Activated naive CD4-positive, alpha-beta T cell treated with anti-CD3 and anti-CD28 coated beads for 36 hours (primary cell): ENCODE measurements at regions of chr19 and their contacts with region 1.

Region 1: DNA sequence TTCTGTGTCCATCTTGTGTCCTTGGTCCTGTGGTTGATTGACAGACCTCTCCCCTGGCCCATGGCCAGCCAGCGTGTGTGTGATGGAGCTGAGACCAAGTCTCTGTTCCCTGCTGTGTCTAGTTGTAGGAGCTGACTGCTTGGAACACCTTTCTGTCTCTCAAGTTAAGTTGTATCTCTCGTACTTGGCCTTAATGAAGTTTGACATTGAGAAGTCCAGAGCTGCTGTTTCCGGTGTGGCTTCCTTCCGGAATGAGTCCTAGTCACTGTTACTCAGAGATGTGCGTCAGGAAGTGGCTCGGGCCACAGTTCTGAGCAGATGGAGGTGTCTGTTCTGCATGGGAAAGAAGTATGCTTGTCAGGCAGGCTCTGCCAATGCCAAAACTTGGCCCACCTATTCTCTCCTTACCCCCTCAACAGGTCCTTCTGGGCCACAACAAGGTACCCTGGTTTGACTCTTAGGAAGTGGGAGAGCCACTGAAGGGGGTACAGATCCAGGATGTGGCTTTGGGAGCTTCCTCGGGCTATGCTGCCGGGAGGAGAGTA is 54.3 kb downstream of the GATAD2A start:
- DNase-seq: peak; percentile 89
- H3K4me3 Mint-ChIP-seq: peak overlapping the region; percentile 76
- H3K27ac Mint-ChIP-seq: peak overlapping the region; percentile 96
- H3K4me1 Mint-ChIP-seq: peaks cover 86% of the 10 kb centered on the region
- H3K27me3 Mint-ChIP-seq: no peaks in the 10 kb centered on the region

Region 2: GRCh38 chr19:19063183-19064097 is 396.3 kb before region 1 on chr19 and contains the start of gene SLC25A42:
- CTCF ChIA-PET with region 1: no interaction called
- intact Hi-C with region 1: loop called (anchors 2 kb)
- DNase-seq: peak; percentile 99
- H3K4me3 Mint-ChIP-seq: peak within 1 kb of the TSS; percentile 85
- H3K27ac Mint-ChIP-seq: peak within 1 kb of the TSS; percentile 83
- H3K4me1 Mint-ChIP-seq: peaks cover 41% of the 10 kb centered on the region
- H3K27me3 Mint-ChIP-seq: no peaks in the 10 kb centered on the region
- total RNA-seq, gene SLC25A42: 6.7 to 8.5 TPM

Region 3: DNA sequence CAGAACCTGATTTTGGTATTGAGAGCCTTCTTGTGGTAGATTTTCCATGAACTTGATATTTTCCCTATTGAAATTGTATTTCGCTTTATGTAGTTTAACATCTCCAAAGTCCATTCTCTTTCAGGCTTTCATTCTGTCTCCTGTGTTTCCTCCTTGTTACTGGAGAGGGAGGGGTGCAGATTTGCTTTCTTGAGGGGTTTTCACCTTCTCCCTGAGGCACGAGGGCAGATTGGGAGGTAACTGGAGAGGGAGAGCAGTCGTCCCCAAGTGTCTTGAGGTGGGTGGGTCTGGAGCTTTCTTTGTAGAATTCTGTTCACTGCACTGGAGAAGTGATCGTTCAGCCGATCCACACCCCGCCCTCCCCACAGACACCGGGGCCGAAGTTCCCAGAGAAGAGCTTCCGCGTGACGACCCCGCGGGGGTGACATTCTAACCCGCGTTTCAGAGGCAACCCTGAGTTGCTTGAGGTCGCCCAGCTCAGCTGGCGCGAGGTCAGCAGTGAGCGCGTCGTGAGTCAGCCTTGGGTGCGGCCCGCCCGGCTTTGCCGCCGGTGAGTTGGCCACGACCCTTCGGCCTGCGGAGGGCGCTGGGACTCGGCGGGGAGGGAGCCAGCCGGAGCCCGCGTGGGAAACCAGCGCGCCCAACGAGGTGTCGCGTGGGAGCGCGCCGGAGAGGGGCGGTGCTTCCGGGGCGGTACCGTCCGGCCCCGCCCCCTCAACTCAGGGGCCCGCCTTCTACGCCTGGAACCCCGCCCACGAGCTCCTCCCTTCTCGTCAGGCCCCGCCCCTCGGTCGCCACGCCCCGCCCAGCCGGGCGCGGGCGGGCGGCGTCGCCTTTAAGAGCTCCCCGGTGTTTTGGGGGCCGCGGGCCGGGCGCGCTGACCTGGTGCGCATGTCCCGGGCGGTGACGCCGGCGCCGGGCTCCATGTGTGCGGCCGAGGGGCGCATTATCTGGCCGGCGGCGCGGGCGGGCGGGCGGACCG is 54.6 kb before region 1 on chr19 and contains the start of gene GATAD2A:
- CTCF ChIA-PET with region 1: interaction called, 4 read pairs
- intact Hi-C with region 1: loop called (anchors 1 kb)
- DNase-seq: peak; percentile 88
- H3K4me3 Mint-ChIP-seq: peak within 1 kb of the TSS; percentile 86
- H3K27ac Mint-ChIP-seq: peak within 1 kb of the TSS; percentile 91
- H3K4me1 Mint-ChIP-seq: peaks cover 63% of the 10 kb centered on the region
- H3K27me3 Mint-ChIP-seq: no peaks in the 10 kb centered on the region
- total RNA-seq, gene GATAD2A: 91.2 to 100 TPM

Region 4: GRCh38 chr19:19475849-19476828 is 16.4 kb after region 1 on chr19:
- CTCF ChIA-PET with region 1: interaction called, 5 read pairs
- intact Hi-C with region 1: loop called (anchors 1 kb)
- DNase-seq: no peak
- H3K4me3 Mint-ChIP-seq: no peak overlapping the region
- H3K27ac Mint-ChIP-seq: no peak overlapping the region
- H3K4me1 Mint-ChIP-seq: peaks cover 76% of the 10 kb centered on the region
- H3K27me3 Mint-ChIP-seq: no peaks in the 10 kb centered on the region